PC-3 (cell line): ENCODE measurements at regions of chr6 and their contacts with region 1.

Region 1: GRCh38 chr6:5379647-5380242 is 118.4 kb downstream of the FARS2 start:
- DNase-seq: peak; percentile 78
- ATAC-seq: peak; percentile 81
- H3K4me3 ChIP-seq: no peak overlapping the region
- H3K27ac ChIP-seq: no peak overlapping the region
- H3K4me1 ChIP-seq: peaks cover under 1% of the 10 kb centered on the region; the same call in 1 of the 2 replicates
- H3K27me3 ChIP-seq: no peaks in the 10 kb centered on the region
- CTCF ChIP-seq: peak; percentile 82

Region 2: DNA sequence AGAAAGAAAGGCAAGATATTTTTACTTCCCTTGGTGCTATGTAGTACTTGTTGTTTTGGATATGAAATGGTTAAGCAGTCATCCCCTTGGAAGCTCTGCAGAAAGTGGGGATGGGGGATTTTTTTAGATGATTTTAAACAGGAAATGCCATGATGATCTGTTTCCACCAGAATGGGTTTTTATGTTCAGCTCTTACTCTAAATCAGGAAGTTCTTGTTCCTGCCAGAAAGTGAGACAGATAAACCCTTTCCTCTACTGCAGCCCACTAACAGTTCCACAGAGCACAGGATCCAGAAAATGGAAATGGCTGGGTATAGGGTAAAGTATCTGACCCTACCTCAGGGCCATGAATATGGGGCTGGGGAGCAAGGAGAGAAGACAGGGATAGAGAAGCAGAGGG is 326.7 kb before region 1 on chr6:
- CTCF ChIA-PET with region 1: interaction called, 5 read pairs
- POLR2A ChIA-PET with region 1: no interaction called
- intact Hi-C with region 1: loop called (anchors 1 kb)
- DNase-seq: no peak
- ATAC-seq: no peak
- H3K4me3 ChIP-seq: no peak overlapping the region
- H3K27ac ChIP-seq: no peak overlapping the region
- H3K4me1 ChIP-seq: no peaks in the 10 kb centered on the region
- H3K27me3 ChIP-seq: no peaks in the 10 kb centered on the region
- CTCF ChIP-seq: no peak

Region 3: GRCh38 chr6:5302995-5303622 is 76.6 kb before region 1 on chr6:
- CTCF ChIA-PET with region 1: interaction called, 3 read pairs
- POLR2A ChIA-PET with region 1: no interaction called
- intact Hi-C with region 1: loop called (anchors 5 kb)
- DNase-seq: peak; percentile 64
- ATAC-seq: peak; percentile 86
- H3K4me3 ChIP-seq: no peak overlapping the region
- H3K27ac ChIP-seq: no peak overlapping the region
- H3K4me1 ChIP-seq: peaks cover 17% of the 10 kb centered on the region
- H3K27me3 ChIP-seq: no peaks in the 10 kb centered on the region
- CTCF ChIP-seq: peak; percentile 67

Region 4: GRCh38 chr6:5343998-5344397 is 35.7 kb before region 1 on chr6:
- CTCF ChIA-PET with region 1: no interaction called
- POLR2A ChIA-PET with region 1: no interaction called
- intact Hi-C with region 1: no loop called
- DNase-seq: no peak
- ATAC-seq: no peak
- H3K4me3 ChIP-seq: no peak overlapping the region
- H3K27ac ChIP-seq: no peak overlapping the region
- H3K4me1 ChIP-seq: no peaks in the 10 kb centered on the region
- H3K27me3 ChIP-seq: no peaks in the 10 kb centered on the region
- CTCF ChIP-seq: no peak